Aorta (tissue), 5 donors: ENCODE measurements at regions of chr2 and their contacts with region 1.

Region 1: DNA sequence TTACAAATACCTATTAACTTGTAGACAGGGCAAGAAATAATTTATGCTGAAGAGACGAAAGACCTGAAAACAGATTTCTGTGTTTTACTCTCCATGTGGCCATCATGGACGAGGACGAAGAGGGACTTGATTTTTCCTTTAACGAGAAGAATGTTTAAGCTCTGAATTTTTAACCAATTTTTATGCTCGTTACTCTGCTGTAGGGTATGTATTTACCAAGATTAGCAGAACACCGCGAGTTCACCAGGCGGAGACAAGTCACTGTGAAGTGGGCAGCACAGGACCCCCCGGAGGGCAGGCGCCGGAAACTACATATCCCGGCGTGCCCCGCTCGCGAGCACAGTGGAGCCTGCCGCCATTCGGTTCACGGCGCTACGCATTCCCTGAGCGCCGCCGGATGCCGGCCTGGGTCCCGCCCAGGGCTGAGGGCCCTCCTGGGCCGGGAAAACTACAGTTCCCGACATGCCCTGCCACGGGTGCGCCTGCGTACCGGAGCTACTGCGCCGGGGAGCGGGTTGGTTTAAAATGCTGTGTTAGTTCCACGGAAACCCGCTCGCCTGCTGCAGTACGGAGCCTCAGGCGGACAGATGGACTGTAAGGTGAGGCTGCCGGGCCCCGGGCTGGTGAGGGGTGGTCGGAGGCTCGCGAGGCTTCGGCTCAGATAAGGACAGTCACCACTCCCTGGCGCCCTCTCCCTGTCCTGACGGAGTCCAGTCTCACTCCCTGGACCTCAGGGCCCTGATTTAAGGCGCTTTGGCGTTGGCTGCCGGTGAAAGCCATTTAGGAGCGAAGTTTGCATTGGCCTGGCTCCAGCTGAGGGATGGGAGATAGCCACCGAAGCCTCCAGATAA is at the start of gene CCDC150:
- DNase-seq: peak; percentile 96 to 97
- ATAC-seq: peak; percentile 100
- H3K4me3 ChIP-seq: peak within 1 kb of the TSS; percentile 48 to 66
- H3K27ac ChIP-seq: no peak within 1 kb of the TSS
- H3K4me1 ChIP-seq: no peaks in the 10 kb centered on the region
- H3K27me3 ChIP-seq: no peaks in the 10 kb centered on the region
- total RNA-seq, gene CCDC150: 1.6 to 3.3 TPM

Region 2: DNA sequence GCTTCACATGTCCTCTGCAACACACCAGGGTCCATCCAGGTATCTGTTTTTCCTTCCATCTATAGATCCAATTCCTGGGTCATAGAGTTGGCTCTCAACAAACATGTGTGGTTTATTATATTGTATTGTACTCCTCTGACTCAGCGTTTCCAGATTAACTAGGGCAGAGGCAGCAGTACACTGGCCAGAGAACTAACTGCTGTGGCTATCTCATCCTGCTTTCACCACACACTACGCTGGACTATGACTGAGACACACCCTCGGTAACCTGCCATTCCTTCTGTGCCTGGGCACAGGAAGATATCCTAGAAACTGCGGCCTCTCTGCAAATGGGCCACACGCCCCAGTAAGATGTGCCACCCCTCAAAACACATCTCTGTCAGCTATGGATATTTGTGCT is 308.3 kb before region 1 on chr2:
- intact Hi-C with region 1: no loop called
- DNase-seq: no peak
- ATAC-seq: peak; percentile 76
- H3K4me3 ChIP-seq: no peak overlapping the region
- H3K27ac ChIP-seq: no peak overlapping the region
- H3K4me1 ChIP-seq: no peaks in the 10 kb centered on the region
- H3K27me3 ChIP-seq: no peaks in the 10 kb centered on the region

Region 3: GRCh38 chr2:196592912-196593881 is 46.2 kb before region 1 on chr2:
- intact Hi-C with region 1: loop called in 1 of 2 experiments (anchors 2 kb)
- DNase-seq: peak; percentile 51 to 84
- ATAC-seq: peak; percentile 77
- H3K4me3 ChIP-seq: peak within 1 kb of the TSS; percentile 59 to 83
- H3K27ac ChIP-seq: peak within 1 kb of the TSS; percentile 62 to 75
- H3K4me1 ChIP-seq: peaks cover 0 to 3% of the 10 kb centered on the region in 2 donors
- H3K27me3 ChIP-seq: no peaks in the 10 kb centered on the region

Region 4: DNA sequence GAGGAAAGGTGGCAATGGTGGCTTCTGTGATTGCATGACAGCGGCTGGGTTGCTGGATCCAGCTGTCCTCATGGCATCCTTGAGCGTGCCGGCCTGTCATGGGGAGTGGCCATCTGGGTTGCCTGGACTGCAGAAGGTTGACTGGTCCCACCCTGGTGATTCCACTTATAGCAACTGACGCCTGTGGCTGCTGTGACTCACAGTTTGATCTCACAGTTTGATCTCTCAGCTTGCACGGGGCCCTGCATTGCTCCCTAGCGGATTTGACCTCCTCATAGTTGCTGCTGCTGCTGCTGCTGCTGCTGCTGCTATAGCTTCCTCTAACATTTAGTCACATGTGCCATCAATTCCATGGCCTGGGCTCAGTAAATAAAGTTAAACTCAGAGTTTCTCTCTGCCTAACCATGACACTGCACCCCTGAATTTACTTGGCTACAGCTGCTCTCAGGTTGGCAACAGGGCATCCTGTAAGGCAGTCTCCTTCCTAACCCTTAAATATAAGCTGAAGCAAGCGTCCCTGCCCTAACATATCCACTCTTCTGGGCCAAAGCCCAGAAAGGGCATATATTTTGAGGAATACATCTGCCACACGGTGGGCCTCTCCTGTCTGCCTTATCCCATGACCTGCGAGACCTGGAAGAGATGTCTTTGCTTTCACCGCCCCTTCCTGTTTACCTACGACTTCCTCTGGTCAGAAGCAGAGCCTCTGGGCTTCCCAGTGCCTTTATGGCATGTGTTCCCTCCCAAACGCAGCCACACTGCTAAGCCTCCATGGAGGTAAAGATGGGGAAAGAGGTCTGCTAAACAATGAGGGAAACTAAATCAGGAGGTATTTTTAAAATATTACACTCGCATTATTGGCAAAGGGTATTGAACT is 37.7 kb before region 1 on chr2:
- intact Hi-C with region 1: loop called in 1 of 2 experiments (anchors 5 kb)
- DNase-seq: peak; percentile 82 to 83
- ATAC-seq: peak; percentile 84
- H3K4me3 ChIP-seq: no peak overlapping the region
- H3K27ac ChIP-seq: peak overlapping the region; percentile 37 to 62
- H3K4me1 ChIP-seq: peaks cover 0 to 2% of the 10 kb centered on the region in 2 donors
- H3K27me3 ChIP-seq: no peaks in the 10 kb centered on the region

Region 5: GRCh38 chr2:196971574-196972279 is 332.3 kb after region 1 on chr2:
- intact Hi-C with region 1: no loop called
- DNase-seq: no peak
- ATAC-seq: no peak
- H3K4me3 ChIP-seq: no peak overlapping the region
- H3K27ac ChIP-seq: no peak overlapping the region
- H3K4me1 ChIP-seq: no peaks in the 10 kb centered on the region
- H3K27me3 ChIP-seq: no peaks in the 10 kb centered on the region